ENCODE measurements at regions of chr6 and their contacts with region 1.

Region 1: DNA sequence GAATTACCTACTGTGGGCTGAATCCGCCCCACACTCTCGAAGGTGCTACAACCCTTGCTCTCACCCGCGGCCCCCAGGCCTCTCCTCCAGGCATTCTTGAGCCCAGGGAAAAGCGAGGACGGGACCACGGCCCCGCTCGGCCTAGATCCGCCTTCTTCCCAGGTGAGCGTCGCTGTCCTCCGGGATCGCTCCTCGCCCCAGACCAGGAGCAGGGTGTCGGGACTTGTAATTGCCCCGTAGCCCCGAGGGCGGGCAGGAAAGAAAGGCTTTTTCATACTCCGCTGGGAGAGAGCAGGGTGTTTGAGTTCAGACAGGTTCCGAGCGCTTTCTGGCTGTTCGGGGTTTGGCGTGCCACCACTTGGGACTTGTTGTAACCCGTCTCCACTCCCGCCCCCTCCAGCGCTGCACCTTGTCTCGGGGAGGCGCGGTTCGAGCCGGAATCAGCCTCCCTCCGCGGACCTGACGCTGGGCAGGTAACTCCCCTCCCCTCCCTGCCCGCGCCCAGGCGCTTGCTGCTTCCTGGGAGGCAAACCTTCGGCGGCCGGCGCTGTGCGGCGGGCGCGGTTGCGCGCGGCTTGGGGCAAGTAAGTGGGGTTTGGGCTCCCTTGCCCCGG is at the start of gene FAM83B:
- DNase-seq: peak; percentile 88
- H3K4me3 ChIP-seq: peak within 1 kb of the TSS; percentile 61
- H3K27ac ChIP-seq: peak within 1 kb of the TSS; percentile 88
- H3K4me1 ChIP-seq: no peaks in the 10 kb centered on the region
- H3K27me3 ChIP-seq: no peaks in the 10 kb centered on the region
- CTCF ChIP-seq: no peak
- total RNA-seq, gene FAM83B: 36.6 to 62.8 TPM

Region 2: GRCh38 chr6:54717849-54718455 is 128.4 kb before region 1 on chr6:
- intact Hi-C with region 1: loop called (anchors 10 kb)
- DNase-seq: peak; percentile 94
- H3K4me3 ChIP-seq: no peak overlapping the region
- H3K27ac ChIP-seq: peak overlapping the region; percentile 60
- H3K4me1 ChIP-seq: no peaks in the 10 kb centered on the region
- H3K27me3 ChIP-seq: no peaks in the 10 kb centered on the region
- CTCF ChIP-seq: peak; percentile 85